GM12878 (cell line): ENCODE measurements at regions of chr20 and their contacts with region 1.

Region 1: GRCh38 chr20:36199345-36200257 is 36.7 kb upstream of the AAR2 start:
- DNase-seq: no peak
- ATAC-seq: peak; percentile 91
- H3K4me3 ChIP-seq: no peak overlapping the region
- H3K27ac ChIP-seq: no peak overlapping the region
- H3K4me1 ChIP-seq: no peaks in the 10 kb centered on the region
- H3K27me3 ChIP-seq: peaks cover 0 to 7% of the 10 kb centered on the region in 2 experiments; a peak in 3 of 4 replicates
- CTCF ChIP-seq: peak; percentile 87 to 94 (median 92)
- EP300 ChIP-seq: no peak
- POLR2A ChIP-seq: no peak
- RAD21 ChIP-seq: peak; percentile 63

Region 2: DNA sequence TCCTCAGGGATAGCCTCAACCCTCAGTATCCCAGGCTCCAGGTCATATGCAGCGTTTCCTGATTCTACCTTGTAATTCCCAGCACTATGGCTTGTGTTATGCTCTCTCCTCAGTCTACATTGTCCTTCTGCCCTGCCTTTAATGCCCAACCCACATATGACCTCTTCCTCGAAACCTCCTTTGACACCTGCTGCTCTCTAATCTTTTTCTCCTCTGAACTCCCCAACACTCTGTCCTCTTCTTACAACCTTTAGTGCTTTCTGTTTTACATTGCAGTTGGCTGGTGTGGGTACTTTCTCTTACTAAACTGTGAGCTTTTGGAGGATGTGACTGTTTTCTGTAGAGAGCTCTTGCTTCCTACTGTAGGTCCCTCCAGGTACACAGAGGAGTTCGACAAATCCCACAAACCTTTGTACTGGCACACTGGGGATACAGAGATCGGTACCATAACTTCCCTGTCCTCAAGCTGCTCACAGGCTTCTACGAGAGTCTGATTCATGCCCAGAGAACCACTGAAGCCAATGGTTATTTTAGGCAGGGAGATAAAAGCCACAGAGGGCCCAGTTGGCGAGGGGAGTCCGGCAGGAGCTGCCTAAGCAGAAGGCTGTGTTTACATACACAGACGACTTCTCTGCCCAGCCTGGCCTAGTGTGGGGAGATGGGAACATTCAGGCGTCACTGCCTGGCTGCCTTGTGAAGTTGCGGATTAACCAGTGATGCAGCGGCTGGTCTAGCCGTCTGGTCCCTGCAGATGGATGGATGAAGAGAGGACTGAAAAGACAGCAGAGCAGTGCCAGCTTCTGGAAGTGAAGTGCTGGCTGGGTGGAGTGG is 53.5 kb before region 1 on chr20:
- CTCF ChIA-PET with region 1: interaction called, 23 read pairs
- POLR2A ChIA-PET with region 1: no interaction called
- RAD21 ChIA-PET with region 1: interaction called, 5 read pairs
- SMC1A ChIA-PET with region 1: interaction called, 9 read pairs
- in situ Hi-C with region 1: no loop called
- intact Hi-C with region 1: no loop called
- DNase-seq: no peak
- ATAC-seq: peak; percentile 24
- H3K4me3 ChIP-seq: no peak overlapping the region
- H3K27ac ChIP-seq: no peak overlapping the region
- H3K4me1 ChIP-seq: peaks cover 19% of the 10 kb centered on the region
- H3K27me3 ChIP-seq: no peaks in the 10 kb centered on the region
- CTCF ChIP-seq: no peak
- EP300 ChIP-seq: no peak
- POLR2A ChIP-seq: no peak
- RAD21 ChIP-seq: no peak

Region 3: GRCh38 chr20:36162272-36162966 is 37.2 kb before region 1 on chr20:
- CTCF ChIA-PET with region 1: interaction called, 114 read pairs
- POLR2A ChIA-PET with region 1: no interaction called
- RAD21 ChIA-PET with region 1: interaction called, 17 read pairs
- SMC1A ChIA-PET with region 1: interaction called, 28 read pairs
- in situ Hi-C with region 1: no loop called
- intact Hi-C with region 1: no loop called
- DNase-seq: no peak
- ATAC-seq: no peak; the same call in 1 of the 3 replicates
- H3K4me3 ChIP-seq: no peak overlapping the region
- H3K27ac ChIP-seq: no peak overlapping the region
- H3K4me1 ChIP-seq: no peaks in the 10 kb centered on the region
- H3K27me3 ChIP-seq: peaks cover 0 to 1% of the 10 kb centered on the region in 2 experiments; a peak in 1 of 4 replicates
- CTCF ChIP-seq: no peak
- EP300 ChIP-seq: no peak
- POLR2A ChIP-seq: no peak
- RAD21 ChIP-seq: no peak

Region 4: GRCh38 chr20:36214684-36215256 is 15.2 kb after region 1 on chr20:
- CTCF ChIA-PET with region 1: interaction called, 21 read pairs
- POLR2A ChIA-PET with region 1: no interaction called
- RAD21 ChIA-PET with region 1: interaction called, 3 read pairs
- SMC1A ChIA-PET with region 1: interaction called, 4 read pairs
- in situ Hi-C with region 1: no loop called
- intact Hi-C with region 1: no loop called
- DNase-seq: no peak
- ATAC-seq: peak; percentile 85
- H3K4me3 ChIP-seq: no peak overlapping the region
- H3K27ac ChIP-seq: no peak overlapping the region
- H3K4me1 ChIP-seq: no peaks in the 10 kb centered on the region; the same call in 1 of the 2 replicates
- H3K27me3 ChIP-seq: no peaks in the 10 kb centered on the region; a peak in 2 of 4 replicates
- CTCF ChIP-seq: peak; percentile 66 to 82 (median 74)
- EP300 ChIP-seq: no peak
- POLR2A ChIP-seq: no peak
- RAD21 ChIP-seq: peak; percentile 77

Region 5: GRCh38 chr20:36399147-36399968 is 199.8 kb after region 1 on chr20:
- CTCF ChIA-PET with region 1: interaction called, 17 read pairs
- POLR2A ChIA-PET with region 1: no interaction called
- RAD21 ChIA-PET with region 1: interaction called, 4 read pairs
- SMC1A ChIA-PET with region 1: interaction called, 4 read pairs
- in situ Hi-C with region 1: no loop called
- intact Hi-C with region 1: no loop called
- DNase-seq: no peak
- ATAC-seq: peak; percentile 85
- H3K4me3 ChIP-seq: no peak overlapping the region
- H3K27ac ChIP-seq: no peak overlapping the region
- H3K4me1 ChIP-seq: no peaks in the 10 kb centered on the region
- H3K27me3 ChIP-seq: no peaks in the 10 kb centered on the region
- CTCF ChIP-seq: peak; percentile 40 to 55 (median 40); a peak in 5 of 6 replicates
- EP300 ChIP-seq: no peak
- POLR2A ChIP-seq: no peak
- RAD21 ChIP-seq: peak; percentile 47; the same call in 1 of the 2 replicates

Region 6: GRCh38 chr20:36493013-36493800 is 293.6 kb after region 1 on chr20:
- CTCF ChIA-PET with region 1: interaction called, 10 read pairs
- POLR2A ChIA-PET with region 1: no interaction called
- RAD21 ChIA-PET with region 1: interaction called, 3 read pairs
- SMC1A ChIA-PET with region 1: no interaction called
- in situ Hi-C with region 1: no loop called
- intact Hi-C with region 1: no loop called
- DNase-seq: no peak
- ATAC-seq: peak; percentile 42
- H3K4me3 ChIP-seq: no peak overlapping the region
- H3K27ac ChIP-seq: peak overlapping the region; percentile 59; the same call in 1 of the 2 replicates
- H3K4me1 ChIP-seq: peaks cover 21% of the 10 kb centered on the region
- H3K27me3 ChIP-seq: no peaks in the 10 kb centered on the region
- CTCF ChIP-seq: peak; percentile 21 to 51 (median 48); a peak in 4 of 6 replicates
- EP300 ChIP-seq: no peak
- POLR2A ChIP-seq: no peak
- RAD21 ChIP-seq: peak; percentile 52